ENCODE measurements at regions of chr2 and their contacts with region 1.

Region 1: DNA sequence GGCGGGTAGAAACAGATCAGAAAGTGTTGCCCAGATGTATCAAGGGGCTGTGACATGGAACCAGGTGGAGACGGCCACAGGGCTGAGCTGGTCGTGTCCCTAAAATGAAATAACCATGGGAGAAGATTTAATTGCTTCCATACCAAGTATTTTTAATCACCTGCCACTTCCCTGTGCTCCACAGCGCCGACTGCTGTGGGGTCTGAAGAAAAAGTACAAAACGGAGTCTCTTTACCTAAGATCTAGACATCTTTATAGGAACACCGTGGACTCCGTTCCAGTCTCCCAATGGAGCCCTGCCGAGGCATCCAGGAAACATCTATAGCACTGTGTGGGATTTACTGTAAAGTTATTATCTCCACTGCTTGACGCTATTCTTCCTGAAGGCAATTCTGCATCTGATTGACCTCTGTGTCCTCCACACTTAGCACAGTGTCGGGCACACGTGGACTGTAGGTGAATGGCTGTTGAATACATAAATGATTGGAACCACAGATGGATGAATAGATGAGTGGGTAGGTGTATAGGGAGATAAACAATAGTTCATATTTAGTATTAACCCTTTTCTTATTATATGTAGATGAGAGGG is 21.6 kb upstream of the GYPC start:
- DNase-seq: no peak
- ATAC-seq: no peak
- H3K4me3 ChIP-seq: no peak overlapping the region
- H3K27ac ChIP-seq: no peak overlapping the region
- H3K4me1 ChIP-seq: peaks cover 10% of the 10 kb centered on the region
- H3K27me3 ChIP-seq: no peaks in the 10 kb centered on the region
- CTCF ChIP-seq: peak; percentile 35

Region 2: DNA sequence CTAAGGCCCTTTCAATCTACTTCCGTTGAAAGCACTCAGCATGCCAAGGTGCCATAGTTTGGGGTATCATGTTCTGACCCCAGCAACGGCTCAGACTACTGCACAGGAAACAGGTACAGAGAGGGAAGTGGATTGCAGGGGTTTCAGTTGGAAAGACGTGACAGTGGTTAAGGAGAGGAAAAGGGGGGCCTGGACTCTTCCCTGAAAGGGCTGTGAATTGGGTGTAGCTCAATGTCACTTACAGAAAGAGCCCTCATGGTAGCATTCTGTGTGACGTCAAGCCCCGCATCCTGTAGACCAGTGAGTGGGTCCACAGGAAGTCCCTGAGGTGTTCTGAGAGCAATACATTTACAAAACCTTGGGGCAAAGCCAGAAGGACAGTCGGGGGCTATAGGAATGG is 99.9 kb before region 1 on chr2:
- intact Hi-C with region 1: loop called in 1 of 2 experiments (anchors 10 kb)
- DNase-seq: no peak
- ATAC-seq: no peak
- H3K4me3 ChIP-seq: no peak overlapping the region
- H3K27ac ChIP-seq: no peak overlapping the region
- H3K4me1 ChIP-seq: no peaks in the 10 kb centered on the region
- H3K27me3 ChIP-seq: peaks cover 0 to 3% (median 0%) of the 10 kb centered on the region in 3 donors
- CTCF ChIP-seq: no peak